Activated naive CD4-positive, alpha-beta T cell treated with anti-CD3 and anti-CD28 coated beads for 36 hours (primary cell): ENCODE measurements at regions of chr4 and their contacts with region 1.

Region 1: DNA sequence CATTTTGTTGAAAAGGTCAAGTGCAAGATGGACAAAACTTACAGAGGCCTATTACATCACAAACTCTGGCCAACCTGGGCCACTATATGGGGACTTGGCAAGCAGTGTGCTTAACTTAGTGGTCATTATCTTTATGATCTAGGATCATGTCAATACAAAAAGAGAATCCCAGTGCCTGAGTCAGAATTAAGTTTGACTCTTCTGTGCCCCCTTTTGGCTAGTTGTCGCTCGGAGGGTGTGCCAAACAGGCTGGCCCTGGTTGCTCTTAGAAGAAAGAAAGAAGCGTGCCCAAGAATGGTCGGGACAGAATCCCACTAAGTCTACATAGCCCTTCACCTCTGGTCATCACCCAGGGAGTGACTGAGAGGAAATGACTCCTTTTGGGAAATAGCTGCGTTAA is 100.1 kb downstream of the EIF4E start:
- DNase-seq: peak; percentile 57
- H3K4me3 Mint-ChIP-seq: no peak overlapping the region
- H3K27ac Mint-ChIP-seq: no peak overlapping the region
- H3K4me1 Mint-ChIP-seq: no peaks in the 10 kb centered on the region
- H3K27me3 Mint-ChIP-seq: no peaks in the 10 kb centered on the region

Region 2: GRCh38 chr4:98150092-98150761 is 678.6 kb before region 1 on chr4:
- CTCF ChIA-PET with region 1: no interaction called
- intact Hi-C with region 1: loop called (anchors 2 kb)
- DNase-seq: no peak
- H3K4me3 Mint-ChIP-seq: no peak overlapping the region
- H3K27ac Mint-ChIP-seq: no peak overlapping the region
- H3K4me1 Mint-ChIP-seq: peaks cover 5% of the 10 kb centered on the region
- H3K27me3 Mint-ChIP-seq: peaks cover 6% of the 10 kb centered on the region

Region 3: GRCh38 chr4:98467627-98468072 is 361.2 kb before region 1 on chr4:
- CTCF ChIA-PET with region 1: interaction called, 5 read pairs
- intact Hi-C with region 1: loop called (anchors 1 kb)
- DNase-seq: peak; percentile 85
- H3K4me3 Mint-ChIP-seq: peak overlapping the region; percentile 65
- H3K27ac Mint-ChIP-seq: no peak overlapping the region
- H3K4me1 Mint-ChIP-seq: peaks cover 16% of the 10 kb centered on the region
- H3K27me3 Mint-ChIP-seq: no peaks in the 10 kb centered on the region